ENCODE measurements at regions of chr10 and their contacts with region 1.

Region 1: GRCh38 chr10:46284293-46285229 is 2.2 kb upstream of the ANTXRL start:
- ATAC-seq: peak; percentile 77 to 90 (median 88)
- H3K4me3 ChIP-seq: peak overlapping the region; percentile 43 to 52 (median 45)
- H3K27ac ChIP-seq: peak overlapping the region in 1 of 2 donors; percentile 51
- H3K4me1 ChIP-seq: no peaks in the 10 kb centered on the region

Region 2: DNA sequence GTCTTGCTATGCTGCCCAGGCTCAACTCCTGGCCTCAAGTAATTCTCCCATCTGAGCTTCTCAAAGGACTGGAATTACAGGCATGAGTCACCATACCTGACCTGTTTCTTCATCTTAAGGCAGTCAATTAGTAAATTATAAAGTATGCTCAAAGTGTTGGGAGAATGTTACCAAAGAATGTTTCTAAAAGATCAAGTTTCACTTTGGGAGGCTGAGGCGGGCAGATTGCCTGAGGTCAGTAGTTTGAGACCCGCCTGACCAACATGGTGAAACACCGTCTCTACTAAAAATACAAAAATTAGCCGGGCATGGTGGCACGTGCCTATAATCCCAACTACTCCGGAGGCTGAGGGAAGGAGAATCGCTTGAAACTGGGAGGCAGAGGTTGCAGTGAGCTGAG is 793.5 kb before region 1 on chr10:
- in situ Hi-C with region 1: no loop called
- ATAC-seq: no peak
- H3K4me3 ChIP-seq: no peak overlapping the region
- H3K27ac ChIP-seq: no peak overlapping the region
- H3K4me1 ChIP-seq: no peaks in the 10 kb centered on the region

Region 3: GRCh38 chr10:46106410-46107255 is 177.9 kb before region 1 on chr10:
- in situ Hi-C with region 1: loop called in 6 of 9 experiments (anchors 5 to 25 kb)
- ATAC-seq: peak; percentile 94 to 96 (median 96)
- H3K4me3 ChIP-seq: peak overlapping the region; percentile 29 to 39 (median 34)
- H3K27ac ChIP-seq: no peak overlapping the region
- H3K4me1 ChIP-seq: peaks cover 4 to 7% of the 10 kb centered on the region in 2 donors

Region 4: DNA sequence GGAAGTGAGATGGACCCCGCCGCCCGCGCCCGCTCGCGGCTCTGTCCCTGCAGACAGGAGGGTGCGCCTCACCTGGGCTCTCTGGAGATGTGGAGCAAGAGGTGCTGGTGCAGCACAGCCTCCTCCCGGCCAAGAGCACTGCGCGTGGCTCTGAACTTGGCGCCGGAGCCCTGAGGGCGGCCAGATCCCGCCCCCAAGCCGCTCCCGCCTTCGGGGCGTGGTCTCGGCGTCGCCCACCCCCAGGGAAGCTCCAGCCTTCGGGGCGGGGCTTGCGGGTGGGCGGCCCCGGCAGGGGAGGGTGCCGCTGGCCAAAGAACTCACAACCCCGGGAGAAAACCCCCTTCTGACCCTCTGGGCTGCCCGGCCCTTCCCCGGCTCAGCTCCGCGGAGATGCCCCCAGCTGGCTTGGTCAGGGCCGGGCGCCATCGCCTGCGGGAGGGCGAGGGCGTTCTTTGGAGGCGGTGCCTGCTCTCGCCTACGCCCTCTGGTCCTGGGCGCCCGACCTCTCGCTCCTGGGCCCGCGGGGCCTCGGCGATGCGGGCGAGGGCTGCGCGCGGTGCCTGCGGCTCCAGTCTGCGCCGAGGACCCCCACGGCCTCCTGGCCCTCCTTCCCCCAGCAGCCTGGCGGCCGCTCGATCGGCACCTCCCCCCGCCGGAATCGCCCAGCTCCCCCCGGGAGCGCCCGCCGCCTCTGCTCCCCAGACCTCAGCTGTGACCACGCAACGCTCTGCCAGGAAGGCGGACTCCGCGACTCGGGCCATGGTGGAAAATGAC is 1099.8 kb after region 1 on chr10 and contains the start of gene ZNF488:
- in situ Hi-C with region 1: loop called in 5 of 9 experiments (anchors 5 to 25 kb)
- ATAC-seq: peak; percentile 91 to 95 (median 92)
- H3K4me3 ChIP-seq: peak within 1 kb of the TSS; percentile 53 to 84 (median 76)
- H3K27ac ChIP-seq: peak within 1 kb of the TSS in 1 of 2 donors; percentile 47
- H3K4me1 ChIP-seq: peaks cover 0 to 4% of the 10 kb centered on the region in 2 donors
- total RNA-seq, gene ZNF488: 0.23 to 0.62 (median 0.50) TPM in 7 of 8 experiments, not detected in the other